RWPE1 (cell line): ENCODE measurements at regions of chr12 and their contacts with region 1.

Region 1: DNA sequence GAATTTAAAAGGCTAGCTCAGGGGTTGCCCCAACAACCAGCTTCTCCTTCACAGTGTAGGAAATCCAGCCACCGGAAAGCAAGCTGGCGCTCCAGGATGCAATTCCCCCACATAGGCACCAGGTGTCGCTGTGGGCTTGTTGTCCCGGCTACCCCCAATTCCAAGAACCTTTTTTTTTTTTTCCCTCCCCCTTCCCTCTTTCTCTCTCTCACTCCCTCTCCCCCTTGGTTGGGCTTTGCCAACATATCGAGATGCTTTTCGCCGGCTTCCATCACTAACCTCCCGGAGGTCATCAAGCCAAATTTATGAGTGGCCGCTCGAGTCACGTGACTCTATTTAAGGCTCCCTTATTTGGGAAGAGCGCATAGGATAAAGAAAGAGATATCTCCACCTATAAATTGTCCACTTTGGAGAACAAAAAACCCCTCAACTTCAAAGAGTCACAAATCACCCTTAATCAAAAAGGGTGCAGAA is at the start of gene HOXC5:
- DNase-seq: peak; percentile 82
- H3K27ac ChIP-seq: no peak within 1 kb of the TSS
- CTCF ChIP-seq: peak; percentile 92

Region 2: GRCh38 chr12:53961025-53961761 is 71.5 kb before region 1 on chr12:
- CTCF ChIA-PET with region 1: no interaction called
- POLR2A ChIA-PET with region 1: no interaction called
- DNase-seq: no peak
- H3K27ac ChIP-seq: no peak overlapping the region
- CTCF ChIP-seq: no peak

Region 3: GRCh38 chr12:54017878-54018467 is 14.7 kb before region 1 on chr12:
- CTCF ChIA-PET with region 1: interaction called, 10 read pairs
- POLR2A ChIA-PET with region 1: no interaction called
- DNase-seq: peak; percentile 95
- H3K27ac ChIP-seq: peak overlapping the region; percentile 64
- CTCF ChIP-seq: no peak

Region 4: DNA sequence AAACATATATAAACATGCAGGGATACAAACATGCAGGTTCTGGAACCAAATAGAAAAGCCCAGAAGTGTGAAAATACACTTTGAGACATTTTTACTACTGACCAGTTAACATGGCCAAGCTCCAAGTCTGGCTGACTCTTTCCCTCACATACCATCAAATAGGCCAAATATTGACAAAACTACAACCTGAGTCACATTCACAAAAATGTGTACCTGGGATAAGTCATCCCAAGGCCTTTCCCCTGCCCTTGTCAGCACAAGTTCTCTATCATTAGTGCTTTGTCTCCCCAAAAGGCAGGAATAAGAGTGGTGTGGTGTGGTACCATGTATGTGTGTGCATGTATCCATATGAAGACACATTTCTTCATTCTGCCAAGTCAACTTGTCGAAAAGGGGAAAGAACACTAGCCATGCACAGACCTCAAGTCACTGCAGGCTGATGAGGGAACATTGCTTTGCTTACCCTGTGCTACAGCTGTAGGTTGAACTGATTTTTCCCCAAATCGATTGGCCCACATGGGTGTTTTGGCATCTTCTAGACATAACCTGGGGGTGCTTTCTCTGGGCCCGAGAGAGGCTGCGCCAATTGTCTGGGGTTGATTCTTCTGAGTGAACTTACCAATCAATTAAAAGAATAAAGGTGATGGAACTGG is 35.9 kb after region 1 on chr12:
- CTCF ChIA-PET with region 1: no interaction called
- POLR2A ChIA-PET with region 1: no interaction called
- DNase-seq: peak; percentile 52
- H3K27ac ChIP-seq: no peak overlapping the region
- CTCF ChIP-seq: no peak

Region 5: DNA sequence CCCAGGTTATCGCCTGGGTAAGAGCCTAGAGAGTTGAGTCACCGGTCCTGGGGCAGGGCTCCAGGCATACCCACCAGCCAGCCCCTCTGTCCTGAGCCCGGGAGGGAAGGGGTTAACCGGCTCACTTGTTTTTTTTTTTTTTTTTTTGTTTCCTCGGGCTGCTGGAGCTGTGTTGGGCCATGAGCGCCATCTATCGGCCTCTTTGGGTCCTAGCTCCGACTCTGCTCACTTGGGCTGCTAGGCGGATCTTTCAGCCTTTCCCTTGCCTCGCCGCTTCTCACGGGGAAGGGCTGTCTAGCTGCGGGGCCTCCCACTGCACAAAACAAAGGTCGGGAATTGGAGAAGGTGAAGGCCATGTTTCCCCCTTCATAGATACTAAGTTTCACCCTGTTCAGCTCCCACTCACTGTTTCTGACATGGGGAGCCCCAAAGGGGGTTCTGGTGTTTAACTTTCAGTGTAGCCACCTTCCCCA is 158.9 kb after region 1 on chr12:
- CTCF ChIA-PET with region 1: interaction called, 28 read pairs
- POLR2A ChIA-PET with region 1: no interaction called
- DNase-seq: peak; percentile 86
- H3K27ac ChIP-seq: no peak overlapping the region
- CTCF ChIP-seq: peak; percentile 85

Region 6: GRCh38 chr12:54201001-54201794 is 168.5 kb after region 1 on chr12:
- CTCF ChIA-PET with region 1: interaction called, 20 read pairs
- POLR2A ChIA-PET with region 1: no interaction called
- DNase-seq: peak; percentile 73
- H3K27ac ChIP-seq: no peak overlapping the region
- CTCF ChIP-seq: peak; percentile 92